ENCODE measurements at regions of chr15 and their contacts with region 1.

Region 1: DNA sequence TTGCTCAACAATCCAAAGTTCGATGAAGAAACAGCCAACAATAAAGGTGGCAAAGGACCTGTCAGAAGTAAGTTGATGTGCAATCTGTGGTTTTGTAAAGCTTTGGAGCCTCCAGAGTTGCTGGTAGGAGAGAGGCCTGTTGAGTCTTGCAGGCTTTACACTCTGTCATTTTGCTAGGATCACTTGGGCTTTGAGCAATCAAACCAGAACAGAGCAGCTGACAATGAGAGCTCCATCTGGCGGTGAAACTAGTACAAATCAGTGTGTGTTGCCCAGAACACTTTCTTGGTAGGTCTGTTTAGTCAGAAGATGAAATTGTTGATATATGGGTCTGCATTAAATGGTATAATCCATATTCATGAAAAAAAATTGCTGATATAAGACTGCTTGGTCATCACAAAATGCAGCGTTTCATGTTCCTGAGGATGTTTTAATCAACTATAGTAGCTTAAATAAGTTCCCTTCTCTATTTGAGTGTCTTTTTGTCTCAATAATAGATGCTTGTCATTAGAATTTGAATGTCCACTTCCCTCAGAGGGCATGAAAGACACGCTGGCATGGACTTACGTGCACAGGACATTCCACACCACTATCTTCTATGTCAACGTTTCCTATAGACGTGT is 25.7 kb downstream of the TMOD2 start:
- DNase-seq: peak; percentile 77
- H3K4me3 Mint-ChIP-seq: no peak overlapping the region
- H3K27ac Mint-ChIP-seq: no peak overlapping the region
- H3K4me1 Mint-ChIP-seq: no peaks in the 10 kb centered on the region
- H3K27me3 Mint-ChIP-seq: no peaks in the 10 kb centered on the region

Region 2: DNA sequence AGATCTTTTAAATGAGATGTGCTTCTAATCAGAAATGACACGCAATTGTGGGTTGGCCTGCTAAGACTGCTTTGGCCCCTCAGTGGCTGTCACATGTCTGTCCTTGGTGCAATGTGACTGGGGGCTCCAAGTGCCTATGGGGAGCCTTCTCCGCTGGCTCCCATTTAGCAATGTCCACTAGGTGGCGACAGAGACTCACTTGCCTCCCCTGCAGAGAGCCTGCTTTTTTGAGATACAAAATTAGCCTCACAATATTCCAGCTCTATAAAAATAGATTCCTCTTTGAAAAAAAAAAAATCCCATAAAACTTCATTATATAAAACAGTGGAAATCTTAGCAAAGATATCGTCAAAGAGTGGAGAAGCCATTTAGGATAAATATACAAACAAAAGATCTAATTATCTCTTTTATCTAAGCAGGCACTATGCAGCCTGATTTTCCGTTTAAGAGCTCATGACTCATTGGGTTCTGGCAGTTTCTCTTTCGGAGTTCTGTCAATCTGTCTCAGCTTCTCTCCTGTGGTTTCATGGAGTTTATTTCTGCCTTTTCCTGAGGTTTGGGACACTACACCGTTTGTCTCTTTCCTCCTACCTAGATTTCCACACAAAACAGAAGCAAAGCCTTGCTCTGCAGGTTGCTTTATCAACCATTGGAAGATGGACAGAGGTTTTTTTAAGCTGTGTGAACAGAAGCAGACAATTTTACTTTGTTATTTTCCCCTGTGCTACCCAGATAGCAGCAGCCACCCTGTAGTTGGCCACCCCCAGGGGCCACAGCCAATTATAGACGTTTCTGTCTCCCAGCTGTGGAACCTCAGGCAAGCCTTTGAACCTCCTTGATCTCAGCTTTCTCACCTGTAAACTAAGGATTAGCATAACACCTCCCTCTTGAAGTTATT is 613.9 kb before region 1 on chr15:
- CTCF ChIA-PET with region 1: no interaction called
- intact Hi-C with region 1: loop called (anchors 2 kb)
- DNase-seq: peak; percentile 76
- H3K4me3 Mint-ChIP-seq: no peak overlapping the region
- H3K27ac Mint-ChIP-seq: no peak overlapping the region
- H3K4me1 Mint-ChIP-seq: peaks cover 5% of the 10 kb centered on the region
- H3K27me3 Mint-ChIP-seq: peaks cover 4% of the 10 kb centered on the region

Region 3: DNA sequence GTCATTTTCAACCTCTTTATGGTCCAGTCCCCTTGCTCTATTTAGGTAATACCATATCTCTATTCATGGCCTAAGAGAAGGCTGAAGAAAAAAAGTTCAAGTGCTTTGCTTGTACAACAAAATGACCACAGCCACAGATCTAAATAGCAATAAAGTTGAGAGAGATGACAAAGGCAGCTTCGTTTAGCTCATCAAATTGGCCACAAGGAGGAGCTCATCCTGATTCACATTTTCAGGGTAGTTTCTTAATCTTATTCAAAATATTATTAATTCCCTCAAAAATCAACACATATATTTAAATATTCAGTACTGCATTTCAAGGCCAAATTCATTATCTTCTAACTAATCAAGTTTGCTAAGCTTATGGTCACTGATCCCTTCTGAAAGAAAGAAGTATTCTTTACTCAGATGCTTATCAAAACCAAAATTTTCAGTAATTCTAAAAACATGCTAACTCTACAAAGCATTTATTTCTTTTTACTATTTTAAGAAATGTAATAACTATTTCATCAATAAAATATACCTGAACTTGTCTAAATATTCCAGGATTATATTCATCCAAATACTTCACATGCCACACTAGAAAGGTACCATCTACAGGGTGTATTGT is 240.0 kb before region 1 on chr15:
- CTCF ChIA-PET with region 1: no interaction called
- intact Hi-C with region 1: loop called (anchors 1 kb)
- DNase-seq: no peak
- H3K4me3 Mint-ChIP-seq: no peak overlapping the region
- H3K27ac Mint-ChIP-seq: no peak overlapping the region
- H3K4me1 Mint-ChIP-seq: no peaks in the 10 kb centered on the region
- H3K27me3 Mint-ChIP-seq: no peaks in the 10 kb centered on the region

Region 4: DNA sequence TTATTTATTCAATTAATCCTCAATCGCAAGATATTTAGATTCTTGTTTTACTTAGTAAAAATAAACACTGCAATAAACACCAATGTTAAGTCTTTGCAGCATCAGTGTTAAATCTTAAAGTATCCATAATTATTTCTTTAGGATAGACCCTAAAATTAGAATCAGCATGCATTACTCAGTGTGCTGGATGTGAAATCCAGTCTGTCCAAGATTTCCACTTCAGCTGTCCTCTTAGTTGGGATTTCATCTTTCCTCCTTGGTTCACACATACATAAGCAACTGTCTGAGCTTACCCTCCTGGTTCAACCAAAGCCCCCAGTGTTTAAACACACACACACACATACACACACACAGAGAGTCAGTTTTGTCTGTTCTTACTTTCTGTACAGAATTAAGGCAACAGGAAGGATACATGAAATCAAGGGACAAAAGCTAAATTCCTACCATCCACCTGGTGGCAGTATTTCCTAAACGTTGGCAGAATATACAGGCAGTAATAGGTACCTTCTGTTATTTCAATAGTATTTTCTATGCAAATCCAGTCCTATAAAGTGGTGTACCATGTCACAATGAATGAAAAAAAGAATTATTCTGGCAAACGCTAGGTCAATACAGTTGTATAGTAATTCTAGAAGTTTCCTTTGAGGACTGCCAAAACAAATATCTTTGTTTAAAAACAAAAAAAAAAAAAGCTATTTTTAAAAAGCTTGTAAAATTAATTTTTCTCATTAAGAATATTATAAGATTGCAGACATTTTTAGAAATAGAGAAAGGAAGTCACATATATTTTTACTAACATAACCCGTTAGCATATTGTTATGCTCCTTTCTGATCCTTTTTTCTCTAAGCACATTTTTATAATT is 127.2 kb before region 1 on chr15:
- CTCF ChIA-PET with region 1: interaction called, 201 read pairs
- intact Hi-C with region 1: loop called (anchors 1 kb)
- DNase-seq: peak; percentile 60
- H3K4me3 Mint-ChIP-seq: no peak overlapping the region
- H3K27ac Mint-ChIP-seq: no peak overlapping the region
- H3K4me1 Mint-ChIP-seq: no peaks in the 10 kb centered on the region
- H3K27me3 Mint-ChIP-seq: no peaks in the 10 kb centered on the region

Region 5: DNA sequence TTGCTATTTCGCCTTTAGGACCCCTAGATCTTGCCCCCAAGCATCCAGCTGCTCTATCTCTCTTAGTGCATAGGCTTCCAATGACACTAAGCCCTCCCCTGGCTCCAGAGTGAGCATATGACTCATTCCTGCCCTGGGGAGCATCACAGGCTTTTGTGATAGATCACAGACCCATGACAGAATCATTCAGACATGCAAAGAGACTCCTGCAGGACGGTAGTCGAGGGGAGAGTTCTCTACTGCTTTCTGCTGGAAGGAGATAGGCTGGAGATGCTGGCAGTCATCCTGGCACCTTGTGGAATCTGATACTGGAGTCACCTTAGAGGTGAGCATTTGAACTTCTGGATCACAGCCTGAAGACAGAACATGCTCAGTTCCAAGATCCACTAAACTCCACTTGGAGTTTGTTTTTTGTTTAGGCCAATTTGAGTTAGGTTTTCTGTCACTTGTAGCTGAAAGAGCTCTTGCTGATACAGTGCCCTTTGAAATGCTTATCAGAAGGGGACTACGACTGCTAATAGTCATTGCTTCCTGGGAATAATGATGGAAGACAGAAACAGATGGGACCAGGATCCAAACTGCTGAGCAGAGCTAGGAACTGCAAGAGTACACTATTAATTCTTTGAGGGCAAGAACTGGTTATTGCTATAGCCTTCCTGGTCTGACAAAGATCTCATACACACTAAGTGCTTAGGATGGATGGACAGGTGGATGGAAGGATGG is 50.6 kb before region 1 on chr15:
- CTCF ChIA-PET with region 1: interaction called, 63 read pairs
- intact Hi-C with region 1: loop called (anchors 2 kb)
- DNase-seq: peak; percentile 74
- H3K4me3 Mint-ChIP-seq: no peak overlapping the region
- H3K27ac Mint-ChIP-seq: no peak overlapping the region
- H3K4me1 Mint-ChIP-seq: peaks cover 57% of the 10 kb centered on the region
- H3K27me3 Mint-ChIP-seq: no peaks in the 10 kb centered on the region

Region 6: GRCh38 chr15:51917493-51917892 is 140.4 kb after region 1 on chr15:
- CTCF ChIA-PET with region 1: interaction called, 4 read pairs
- intact Hi-C with region 1: loop called (anchors 5 kb)
- DNase-seq: peak; percentile 36
- H3K4me3 Mint-ChIP-seq: no peak overlapping the region
- H3K27ac Mint-ChIP-seq: no peak overlapping the region
- H3K4me1 Mint-ChIP-seq: no peaks in the 10 kb centered on the region
- H3K27me3 Mint-ChIP-seq: no peaks in the 10 kb centered on the region